Mammary epithelial cell (primary cell): ENCODE measurements at regions of chr2 and their contacts with region 1.

Region 1: DNA sequence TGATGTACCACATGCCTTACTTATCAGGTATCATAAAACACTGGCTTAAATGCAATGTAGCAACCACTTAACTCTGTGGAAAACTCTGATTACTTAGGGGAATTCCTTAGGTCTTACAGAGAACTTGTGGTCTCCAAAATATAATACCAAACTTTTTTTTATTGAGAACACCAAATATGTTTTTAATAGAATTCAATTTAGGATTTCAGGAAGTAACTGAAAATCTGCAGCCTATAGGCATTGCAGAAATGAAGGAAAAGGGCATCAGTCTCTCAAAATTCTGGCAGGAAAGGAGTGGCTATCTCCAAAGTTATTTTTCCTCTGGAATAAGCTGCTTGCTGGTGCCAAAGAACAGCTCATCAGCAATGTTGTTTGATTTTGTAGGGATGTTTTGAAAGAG is 105.3 kb upstream of the UGP2 start:
- DNase-seq: peak; percentile 13
- H3K4me3 ChIP-seq: no peak overlapping the region
- H3K27ac ChIP-seq: peak overlapping the region; percentile 92
- H3K4me1 ChIP-seq: peaks cover 46% of the 10 kb centered on the region
- H3K27me3 ChIP-seq: no peaks in the 10 kb centered on the region
- CTCF ChIP-seq: no peak

Region 2: GRCh38 chr2:63790913-63791312 is 54.6 kb after region 1 on chr2:
- CTCF ChIA-PET with region 1: interaction called, 6 read pairs
- dilution Hi-C with region 1: no loop called
- in situ Hi-C with region 1: no loop called
- intact Hi-C with region 1: loop called (anchors 5 kb)
- DNase-seq: peak; percentile 67
- H3K4me3 ChIP-seq: no peak overlapping the region
- H3K27ac ChIP-seq: peak overlapping the region; percentile 35
- H3K4me1 ChIP-seq: peaks cover 37% of the 10 kb centered on the region
- H3K27me3 ChIP-seq: no peaks in the 10 kb centered on the region
- CTCF ChIP-seq: no peak

Region 3: GRCh38 chr2:63903003-63903402 is 166.6 kb after region 1 on chr2:
- CTCF ChIA-PET with region 1: no interaction called
- dilution Hi-C with region 1: no loop called
- in situ Hi-C with region 1: no loop called
- intact Hi-C with region 1: no loop called
- DNase-seq: peak; percentile 5
- H3K4me3 ChIP-seq: no peak overlapping the region
- H3K27ac ChIP-seq: no peak overlapping the region
- H3K4me1 ChIP-seq: no peaks in the 10 kb centered on the region
- H3K27me3 ChIP-seq: no peaks in the 10 kb centered on the region
- CTCF ChIP-seq: no peak